ENCODE measurements at regions of chr3 and their contacts with region 1.

Region 1: GRCh38 chr3:52231502-52232293 is 6.3 kb upstream of the TLR9 start:
- DNase-seq: peak; percentile 81 to 90 (median 88)
- H3K4me3 ChIP-seq: no peak overlapping the region
- H3K4me3 Mint-ChIP-seq: peak overlapping the region; percentile 31 to 66 (median 59)
- H3K27ac ChIP-seq: no peak overlapping the region
- H3K27ac Mint-ChIP-seq: peak overlapping the region; percentile 13 to 95 (median 86)
- H3K4me1 ChIP-seq: peaks cover 53% of the 10 kb centered on the region
- H3K4me1 Mint-ChIP-seq: peaks cover 39 to 71% (median 53%) of the 10 kb centered on the region in 3 donors
- H3K27me3 ChIP-seq: no peaks in the 10 kb centered on the region
- H3K27me3 Mint-ChIP-seq: peaks cover 0 to 2% of the 10 kb centered on the region in 2 donors

Region 2: DNA sequence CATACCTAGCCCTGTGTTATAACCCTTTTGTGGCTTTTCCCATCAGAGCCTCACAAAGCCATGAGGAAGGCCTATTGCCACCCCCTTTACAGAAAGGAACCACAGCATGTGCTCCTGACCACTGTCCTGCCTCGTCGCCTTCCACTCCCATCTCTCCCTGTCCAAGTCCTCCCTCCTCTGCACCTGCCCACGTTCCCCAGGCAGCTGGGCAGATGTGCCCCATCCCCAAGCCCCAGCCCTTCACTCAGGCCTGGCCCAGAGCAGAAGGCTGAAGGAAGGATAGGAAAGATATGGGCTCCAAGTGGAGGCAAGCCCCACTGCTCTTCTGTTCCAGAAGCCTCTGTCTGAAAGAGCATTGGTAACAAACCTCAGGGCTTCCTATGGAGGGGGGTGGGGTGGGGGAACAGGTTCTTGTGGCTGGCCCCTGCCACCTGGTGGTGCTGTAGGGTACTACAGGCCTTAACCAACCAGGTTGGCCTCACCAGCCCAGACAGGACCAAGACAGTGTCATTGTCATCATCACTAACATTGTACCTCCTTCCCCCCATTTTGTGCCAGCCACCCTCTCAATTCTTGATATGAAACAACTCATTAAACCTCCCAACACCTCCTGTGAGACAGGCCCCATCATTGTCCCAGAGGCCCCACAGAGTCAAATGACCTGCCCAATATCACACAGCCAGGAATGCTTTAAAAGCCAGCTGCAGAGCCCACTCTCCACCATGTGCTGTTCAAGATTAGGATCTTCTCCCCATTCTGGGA is 87.5 kb before region 1 on chr3:
- CTCF ChIA-PET with region 1: no interaction called
- POLR2A ChIA-PET with region 1: no interaction called
- DNase-seq: peak; percentile 75 to 91 (median 83)
- H3K4me3 ChIP-seq: no peak overlapping the region
- H3K4me3 Mint-ChIP-seq: no peak overlapping the region
- H3K27ac ChIP-seq: no peak overlapping the region
- H3K27ac Mint-ChIP-seq: peak overlapping the region in 6 of 8 donors; percentile 10 to 67 (median 34)
- H3K4me1 ChIP-seq: peaks cover 6% of the 10 kb centered on the region
- H3K4me1 Mint-ChIP-seq: peaks cover 6 to 8% (median 8%) of the 10 kb centered on the region in 3 donors
- H3K27me3 ChIP-seq: no peaks in the 10 kb centered on the region
- H3K27me3 Mint-ChIP-seq: no peaks in the 10 kb centered on the region

Region 3: GRCh38 chr3:52245322-52246263 is 13.9 kb after region 1 on chr3 and contains the start of gene PPM1M:
- CTCF ChIA-PET with region 1: interaction called, 71 read pairs
- POLR2A ChIA-PET with region 1: interaction called, 3 read pairs
- DNase-seq: peak; percentile 65 to 83 (median 81)
- H3K4me3 ChIP-seq: peak within 1 kb of the TSS; percentile 82
- H3K4me3 Mint-ChIP-seq: peak within 1 kb of the TSS; percentile 84 to 95 (median 91)
- H3K27ac ChIP-seq: peak within 1 kb of the TSS; percentile 82
- H3K27ac Mint-ChIP-seq: peak within 1 kb of the TSS; percentile 88 to 100 (median 96)
- H3K4me1 ChIP-seq: peaks cover 79% of the 10 kb centered on the region
- H3K4me1 Mint-ChIP-seq: peaks cover 76 to 87% (median 84%) of the 10 kb centered on the region in 3 donors
- H3K27me3 ChIP-seq: no peaks in the 10 kb centered on the region
- H3K27me3 Mint-ChIP-seq: no peaks in the 10 kb centered on the region
- total RNA-seq, gene PPM1M: 56.6 to 60.8 TPM

Region 4: GRCh38 chr3:52259035-52259434 is 27.3 kb after region 1 on chr3:
- CTCF ChIA-PET with region 1: interaction called, 71 read pairs
- POLR2A ChIA-PET with region 1: interaction called, 17 read pairs
- DNase-seq: no peak
- H3K4me3 ChIP-seq: no peak overlapping the region
- H3K4me3 Mint-ChIP-seq: no peak overlapping the region
- H3K27ac ChIP-seq: no peak overlapping the region
- H3K27ac Mint-ChIP-seq: peak overlapping the region in 7 of 8 donors; percentile 36 to 98 (median 85)
- H3K4me1 ChIP-seq: peaks cover 94% of the 10 kb centered on the region
- H3K4me1 Mint-ChIP-seq: peaks cover 81 to 98% (median 97%) of the 10 kb centered on the region in 3 donors
- H3K27me3 ChIP-seq: no peaks in the 10 kb centered on the region
- H3K27me3 Mint-ChIP-seq: no peaks in the 10 kb centered on the region

Region 5: GRCh38 chr3:52291508-52292181 is 59.9 kb after region 1 on chr3:
- CTCF ChIA-PET with region 1: interaction called, 30 read pairs
- POLR2A ChIA-PET with region 1: no interaction called
- DNase-seq: peak in 4 of 5 donors; percentile 17 to 72 (median 48)
- H3K4me3 ChIP-seq: no peak overlapping the region
- H3K4me3 Mint-ChIP-seq: peak overlapping the region in 4 of 7 donors; percentile 30 to 78 (median 60)
- H3K27ac ChIP-seq: no peak overlapping the region
- H3K27ac Mint-ChIP-seq: peak overlapping the region in 4 of 8 donors; percentile 27 to 89 (median 46)
- H3K4me1 ChIP-seq: peaks cover 28% of the 10 kb centered on the region
- H3K4me1 Mint-ChIP-seq: peaks cover 31 to 46% (median 35%) of the 10 kb centered on the region in 3 donors
- H3K27me3 ChIP-seq: no peaks in the 10 kb centered on the region
- H3K27me3 Mint-ChIP-seq: peaks cover 0 to 3% of the 10 kb centered on the region in 2 donors

Region 6: DNA sequence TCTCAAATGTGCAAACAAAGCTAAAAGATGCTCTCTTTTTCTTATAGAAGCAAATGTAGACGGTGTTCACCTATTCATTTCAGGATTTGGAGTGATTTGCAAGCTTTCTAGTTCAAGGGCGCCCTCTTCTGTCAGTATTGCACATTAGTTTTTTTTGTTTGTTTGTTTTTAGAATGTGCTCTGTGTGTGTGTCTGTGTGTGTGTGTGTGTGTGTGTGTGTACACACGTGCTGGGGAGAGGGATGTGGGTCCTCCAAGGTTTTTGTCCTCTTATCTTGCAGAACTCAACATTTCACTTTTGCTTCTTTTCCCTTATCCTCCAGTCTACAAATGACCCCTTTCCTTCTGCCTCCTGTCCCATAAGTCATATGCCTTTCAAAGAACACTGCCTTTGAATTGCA is 107.9 kb after region 1 on chr3:
- CTCF ChIA-PET with region 1: interaction called, 115 read pairs
- POLR2A ChIA-PET with region 1: interaction called, 10 read pairs
- DNase-seq: peak; percentile 10 to 72 (median 60)
- H3K4me3 ChIP-seq: no peak overlapping the region
- H3K4me3 Mint-ChIP-seq: no peak overlapping the region
- H3K27ac ChIP-seq: no peak overlapping the region
- H3K27ac Mint-ChIP-seq: peak overlapping the region in 5 of 8 donors; percentile 1 to 62 (median 17)
- H3K4me1 ChIP-seq: no peaks in the 10 kb centered on the region
- H3K4me1 Mint-ChIP-seq: peaks cover 5 to 7% (median 6%) of the 10 kb centered on the region in 3 donors
- H3K27me3 ChIP-seq: no peaks in the 10 kb centered on the region
- H3K27me3 Mint-ChIP-seq: no peaks in the 10 kb centered on the region

Measured in CD8-positive, alpha-beta memory T cell (primary cell).